Ascending aorta (tissue), 2 donors: ENCODE measurements at regions of chr18 and their contacts with region 1.

Region 1: DNA sequence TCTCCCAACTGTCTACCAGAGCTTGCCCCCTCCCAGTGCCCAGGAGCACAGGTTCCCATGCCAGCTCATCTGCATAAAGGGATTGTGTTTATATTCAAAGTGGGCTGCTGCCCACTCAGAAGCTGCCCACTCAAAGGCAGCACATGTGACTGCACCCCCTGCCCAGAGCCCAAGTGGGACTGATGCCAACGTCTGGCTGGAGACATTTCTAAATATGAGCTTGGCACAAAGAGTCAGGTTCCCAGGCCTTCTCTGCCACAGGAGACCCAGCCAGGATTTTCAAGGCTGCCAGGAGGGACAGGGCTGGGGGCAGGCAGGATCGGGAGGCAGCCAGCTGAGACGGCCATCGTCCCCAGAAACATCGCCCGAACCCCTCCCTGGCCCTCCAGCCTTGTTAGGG is 67.1 kb downstream of the ZBTB7C start:
- DNase-seq: no peak
- H3K4me3 ChIP-seq: peak overlapping the region in 1 of 2 donors; percentile 37
- H3K27ac ChIP-seq: peak overlapping the region; percentile 81 to 84
- H3K4me1 ChIP-seq: peaks cover 4 to 28% of the 10 kb centered on the region in 2 donors
- H3K27me3 ChIP-seq: no peaks in the 10 kb centered on the region
- CTCF ChIP-seq: no peak

Region 2: GRCh38 chr18:48161191-48161910 is 180.8 kb before region 1 on chr18:
- intact Hi-C with region 1: loop called (anchors 5 kb)
- DNase-seq: peak in 1 of 2 donors; percentile 88
- H3K4me3 ChIP-seq: peak overlapping the region; percentile 67 to 93
- H3K27ac ChIP-seq: peak overlapping the region; percentile 86 to 94
- H3K4me1 ChIP-seq: peaks cover 2 to 12% of the 10 kb centered on the region in 2 donors
- H3K27me3 ChIP-seq: no peaks in the 10 kb centered on the region
- CTCF ChIP-seq: no peak

Region 3: GRCh38 chr18:48580782-48581181 is 238.7 kb after region 1 on chr18:
- intact Hi-C with region 1: no loop called
- DNase-seq: no peak
- H3K4me3 ChIP-seq: no peak overlapping the region
- H3K27ac ChIP-seq: no peak overlapping the region
- H3K4me1 ChIP-seq: peaks cover 5 to 39% of the 10 kb centered on the region in 2 donors
- H3K27me3 ChIP-seq: no peaks in the 10 kb centered on the region
- CTCF ChIP-seq: no peak